Heart left ventricle (tissue), 16 donors: ENCODE measurements at regions of chr2 and their contacts with region 1.

Region 1: DNA sequence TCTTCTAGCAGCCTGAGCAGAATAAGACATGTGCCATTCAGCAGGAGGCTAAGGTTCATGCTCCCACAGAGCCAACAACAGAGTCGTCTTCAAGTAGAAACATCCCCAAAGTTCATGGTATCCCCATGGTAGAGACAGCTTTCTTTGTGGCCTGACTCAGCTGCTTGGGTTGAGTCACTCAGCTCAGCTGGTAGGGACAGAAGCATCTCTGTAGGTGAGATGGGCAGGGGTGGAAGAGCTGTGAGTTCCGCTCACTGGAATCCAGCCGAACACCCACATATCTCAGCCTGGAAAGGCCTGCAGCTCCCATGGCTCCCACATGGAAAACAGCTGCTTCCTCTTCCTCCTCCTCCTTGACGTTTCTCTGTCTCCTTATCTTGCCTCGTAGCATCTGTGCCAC is 792.7 kb downstream of the RNF144A start:
- DNase-seq: peak in 1 of 5 donors; percentile 16
- ATAC-seq: peak in 1 of 4 donors; percentile 39
- H3K4me3 ChIP-seq: no peak overlapping the region
- H3K27ac ChIP-seq: no peak overlapping the region
- H3K4me1 ChIP-seq: no peaks in the 10 kb centered on the region
- H3K27me3 ChIP-seq: no peaks in the 10 kb centered on the region
- CTCF ChIP-seq: no peak
- POLR2A ChIP-seq: no peak

Region 2: GRCh38 chr2:7572450-7572849 is 137.5 kb before region 1 on chr2:
- intact Hi-C with region 1: no loop called
- DNase-seq: no peak
- ATAC-seq: no peak
- H3K4me3 ChIP-seq: no peak overlapping the region
- H3K27ac ChIP-seq: no peak overlapping the region
- H3K4me1 ChIP-seq: no peaks in the 10 kb centered on the region
- H3K27me3 ChIP-seq: peaks cover 0 to 6% (median 0%) of the 10 kb centered on the region in 9 donors
- CTCF ChIP-seq: no peak
- POLR2A ChIP-seq: no peak

Region 3: GRCh38 chr2:7665880-7666279 is 44.0 kb before region 1 on chr2:
- intact Hi-C with region 1: no loop called
- DNase-seq: no peak
- ATAC-seq: no peak
- H3K4me3 ChIP-seq: no peak overlapping the region
- H3K27ac ChIP-seq: no peak overlapping the region
- H3K4me1 ChIP-seq: peaks cover 0 to 3% (median 0%) of the 10 kb centered on the region in 12 donors
- H3K27me3 ChIP-seq: no peaks in the 10 kb centered on the region
- CTCF ChIP-seq: no peak
- POLR2A ChIP-seq: no peak

Region 4: DNA sequence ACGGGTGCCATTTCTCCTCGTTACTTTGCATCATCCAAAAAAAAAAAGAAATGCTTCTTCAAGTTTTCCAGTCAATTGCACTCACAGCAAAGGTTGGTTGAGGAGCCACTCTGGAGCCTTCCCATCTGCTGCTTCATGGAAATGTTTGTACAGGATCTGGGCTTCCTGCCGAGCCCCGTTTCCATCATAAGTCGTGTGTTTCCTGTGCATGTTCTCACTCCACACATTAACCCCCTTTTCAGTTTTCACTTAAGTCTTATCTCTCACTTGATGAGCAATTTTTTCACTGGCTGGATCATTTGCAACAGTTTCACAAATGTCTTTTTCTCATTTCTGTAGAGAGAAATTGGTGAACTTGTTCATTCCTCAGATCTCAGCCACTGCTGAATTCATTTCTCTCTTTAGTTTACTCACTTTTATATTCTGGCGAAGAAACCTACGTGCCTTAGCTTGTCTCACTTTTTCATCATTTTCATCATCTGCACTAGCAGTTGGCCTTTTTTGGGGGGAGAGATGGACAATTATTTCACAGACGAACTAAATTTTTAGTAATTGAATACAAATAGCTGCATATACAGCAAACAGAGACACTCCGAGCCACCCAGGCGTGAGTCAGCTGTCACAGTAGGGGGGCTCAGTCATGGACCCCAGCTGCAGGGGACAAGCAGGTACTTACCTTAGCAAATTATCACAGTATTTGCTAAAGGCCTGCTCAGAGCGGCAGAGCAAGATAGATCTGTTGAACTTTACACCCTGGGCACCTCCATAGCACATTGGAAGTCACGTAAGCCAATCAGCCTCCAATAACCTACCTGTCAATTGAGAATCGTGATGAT is 221.1 kb after region 1 on chr2:
- intact Hi-C with region 1: loop called in 1 of 10 experiments (anchors 10 kb)
- DNase-seq: peak in 3 of 5 donors; percentile 32 to 54 (median 41)
- ATAC-seq: peak in 3 of 4 donors; percentile 54 to 70 (median 58)
- H3K4me3 ChIP-seq: no peak overlapping the region
- H3K27ac ChIP-seq: no peak overlapping the region
- H3K4me1 ChIP-seq: no peaks in the 10 kb centered on the region
- H3K27me3 ChIP-seq: no peaks in the 10 kb centered on the region
- CTCF ChIP-seq: no peak
- POLR2A ChIP-seq: no peak

Region 5: GRCh38 chr2:8259106-8259840 is 549.4 kb after region 1 on chr2:
- intact Hi-C with region 1: no loop called
- DNase-seq: no peak
- ATAC-seq: no peak
- H3K4me3 ChIP-seq: no peak overlapping the region
- H3K27ac ChIP-seq: no peak overlapping the region
- H3K4me1 ChIP-seq: peaks cover 0 to 6% (median 0%) of the 10 kb centered on the region in 12 donors
- H3K27me3 ChIP-seq: no peaks in the 10 kb centered on the region
- CTCF ChIP-seq: no peak
- POLR2A ChIP-seq: no peak